Activated T-helper 2 cell treated with anti-CD3 and anti-CD28 coated beads, Interferon-gamma antibody, Interleukin-2, Interleukin-4, amounts not matched to agents 10 μg/mL and 5 μg/mL and 100 μg/mL, durations not matched to agents 14 hours and 24 hours and 36 hours (primary cell): ENCODE measurements at regions of chr10 and their contacts with region 1.

Region 1: DNA sequence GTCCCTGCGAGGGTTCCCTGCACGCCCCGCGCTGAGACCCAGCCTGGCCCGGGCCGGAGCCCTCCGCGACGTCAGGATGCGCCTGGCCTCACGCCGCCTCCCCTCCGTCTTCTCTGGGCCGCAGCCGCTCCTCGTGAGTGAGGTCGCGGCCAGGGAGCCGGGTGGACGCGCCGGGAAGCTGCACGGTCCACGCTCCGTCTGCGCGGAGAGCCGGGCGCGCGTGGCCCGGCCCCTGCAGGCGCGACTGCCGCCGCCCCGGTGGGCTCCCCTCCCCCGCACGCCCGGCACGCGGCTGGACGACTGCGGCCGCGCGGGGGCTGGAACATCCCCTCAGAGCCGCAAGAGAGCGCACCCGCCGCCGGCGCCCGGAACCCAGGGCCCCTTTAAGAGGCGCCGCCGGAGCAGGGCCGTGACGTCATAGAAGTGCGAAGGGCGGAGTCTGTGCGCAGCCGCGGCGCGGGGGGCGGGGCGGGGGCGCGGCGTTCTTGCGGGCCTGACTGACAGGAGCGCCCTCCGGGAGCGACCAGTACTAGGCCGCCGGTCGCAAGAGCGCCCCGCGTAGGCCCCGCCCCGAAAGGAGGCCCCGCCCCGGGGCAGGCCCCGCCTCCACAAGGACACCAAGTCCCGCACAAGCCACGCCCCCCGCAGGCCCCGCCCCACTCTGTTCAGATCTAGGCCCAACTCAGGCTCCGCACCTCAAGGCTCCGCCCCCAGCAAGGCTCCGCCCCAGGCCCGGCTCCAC is 445 bp upstream of the INPP5A start:
- DNase-seq: peak; percentile 100
- H3K4me3 Mint-ChIP-seq: peak overlapping the region; percentile 61
- H3K27ac Mint-ChIP-seq: no peak overlapping the region
- H3K4me1 Mint-ChIP-seq: peaks cover 38% of the 10 kb centered on the region
- H3K27me3 Mint-ChIP-seq: peaks cover 10% of the 10 kb centered on the region

Region 2: DNA sequence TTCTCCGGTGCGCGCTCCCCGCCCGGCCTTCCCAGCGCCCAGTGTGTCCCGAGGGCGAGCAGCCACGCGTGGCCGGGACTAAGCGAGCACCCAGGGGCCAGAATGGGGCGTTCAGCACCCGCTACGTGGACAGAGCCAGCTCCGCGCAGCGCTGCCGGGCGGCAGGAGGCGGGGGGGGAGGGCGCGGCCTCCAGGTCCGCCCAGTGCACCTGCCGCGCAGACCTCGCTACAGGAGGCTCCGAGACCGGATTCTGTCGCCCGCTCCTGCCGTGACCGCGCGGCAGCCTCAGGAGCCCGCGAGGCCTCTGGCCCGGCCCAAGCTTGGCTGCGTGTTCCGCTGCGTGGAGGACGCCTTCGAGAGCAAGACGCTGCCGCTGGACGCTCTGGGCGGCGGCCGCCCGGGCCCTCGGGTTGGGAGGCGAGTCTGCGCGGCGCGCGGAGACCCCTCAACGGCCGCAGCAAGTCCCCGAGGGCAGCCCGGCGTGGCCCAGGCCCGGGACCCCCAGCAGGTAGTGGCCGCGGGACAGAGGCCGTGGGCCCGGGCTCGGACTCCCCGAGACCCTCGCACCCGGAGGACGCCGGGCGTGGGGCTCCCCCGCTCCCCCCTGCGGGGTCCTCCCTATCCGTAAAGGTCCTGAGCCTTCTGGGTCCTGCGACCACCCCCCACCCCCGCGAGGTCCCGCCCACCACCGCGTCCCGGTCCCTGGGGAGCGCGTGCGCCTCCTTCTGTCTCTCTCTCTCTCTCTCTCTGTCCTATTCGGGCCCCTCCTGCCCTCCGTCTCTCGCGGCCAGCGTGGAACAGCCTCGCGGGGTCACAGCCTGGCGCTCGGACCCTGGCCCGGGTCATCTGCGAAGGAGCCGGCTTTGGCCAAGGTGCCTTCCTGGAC is 351.3 kb before region 1 on chr10:
- intact Hi-C with region 1: loop called (anchors 2 kb)
- DNase-seq: peak; percentile 64
- H3K4me3 Mint-ChIP-seq: peak overlapping the region; percentile 54
- H3K27ac Mint-ChIP-seq: no peak overlapping the region
- H3K4me1 Mint-ChIP-seq: no peaks in the 10 kb centered on the region
- H3K27me3 Mint-ChIP-seq: peaks cover 36% of the 10 kb centered on the region

Region 3: GRCh38 chr10:132307823-132308587 is 229.1 kb before region 1 on chr10 and contains the start of gene STK32C:
- intact Hi-C with region 1: loop called (anchors 1 kb)
- DNase-seq: peak; percentile 81
- H3K4me3 Mint-ChIP-seq: peak within 1 kb of the TSS; percentile 90
- H3K27ac Mint-ChIP-seq: peak within 1 kb of the TSS; percentile 38
- H3K4me1 Mint-ChIP-seq: peaks cover 4% of the 10 kb centered on the region
- H3K27me3 Mint-ChIP-seq: peaks cover 31% of the 10 kb centered on the region
- total RNA-seq, gene STK32C: 17.3 and 18.8 TPM in 2 replicates

Region 4: GRCh38 chr10:132446661-132447194 is 90.4 kb before region 1 on chr10:
- intact Hi-C with region 1: loop called (anchors 2 kb)
- DNase-seq: peak; percentile 69
- H3K4me3 Mint-ChIP-seq: peak overlapping the region; percentile 66
- H3K27ac Mint-ChIP-seq: peak overlapping the region; percentile 96
- H3K4me1 Mint-ChIP-seq: peaks cover 26% of the 10 kb centered on the region
- H3K27me3 Mint-ChIP-seq: no peaks in the 10 kb centered on the region

Region 5: DNA sequence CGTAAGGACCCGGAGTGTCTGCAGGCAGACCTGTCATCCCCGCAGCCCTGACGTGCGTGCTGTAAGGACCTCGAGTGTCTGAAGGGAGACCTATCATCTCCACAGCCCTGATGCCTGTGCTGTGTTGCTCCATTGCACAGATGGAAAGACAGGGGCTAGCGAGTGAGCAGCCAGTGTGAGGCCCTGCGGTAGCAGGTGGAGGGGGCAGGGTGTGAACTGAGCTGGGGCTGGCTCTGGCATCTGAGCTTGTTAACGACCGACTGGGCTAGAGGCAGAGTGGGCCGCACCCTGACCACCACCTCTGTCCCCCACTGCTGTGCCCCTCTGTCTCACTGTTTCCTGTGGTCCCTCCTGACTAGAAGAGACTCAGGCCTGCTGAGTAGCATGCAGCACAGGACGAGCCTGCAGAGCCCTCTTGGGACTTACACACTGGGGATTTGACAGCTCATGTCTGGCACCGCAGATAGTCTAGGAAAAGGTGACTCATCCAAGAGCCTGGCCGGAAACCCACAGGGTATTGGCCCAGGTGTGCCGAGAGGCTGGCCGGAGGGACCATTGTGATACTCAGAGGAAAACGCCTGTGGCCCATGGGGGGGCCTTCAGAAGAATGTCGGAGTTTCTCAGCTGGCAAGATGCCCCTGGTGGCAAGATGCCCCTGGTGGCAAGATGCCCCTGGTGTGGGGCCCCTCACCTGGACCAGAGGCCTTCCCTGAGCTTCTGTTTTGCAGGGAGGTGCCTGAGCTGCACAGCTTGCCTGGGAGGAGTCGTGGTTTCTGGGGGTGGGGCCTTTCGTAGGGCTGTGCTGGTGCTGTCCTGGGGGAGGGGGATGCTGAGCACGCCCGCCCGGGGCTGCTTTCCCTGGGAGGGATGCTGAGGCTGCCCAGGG is 34.8 kb after region 1 on chr10:
- intact Hi-C with region 1: loop called (anchors 1 kb)
- DNase-seq: peak; percentile 72
- H3K4me3 Mint-ChIP-seq: peak overlapping the region; percentile 18
- H3K27ac Mint-ChIP-seq: peak overlapping the region; percentile 64
- H3K4me1 Mint-ChIP-seq: peaks cover 21% of the 10 kb centered on the region
- H3K27me3 Mint-ChIP-seq: peaks cover 4% of the 10 kb centered on the region

Region 6: DNA sequence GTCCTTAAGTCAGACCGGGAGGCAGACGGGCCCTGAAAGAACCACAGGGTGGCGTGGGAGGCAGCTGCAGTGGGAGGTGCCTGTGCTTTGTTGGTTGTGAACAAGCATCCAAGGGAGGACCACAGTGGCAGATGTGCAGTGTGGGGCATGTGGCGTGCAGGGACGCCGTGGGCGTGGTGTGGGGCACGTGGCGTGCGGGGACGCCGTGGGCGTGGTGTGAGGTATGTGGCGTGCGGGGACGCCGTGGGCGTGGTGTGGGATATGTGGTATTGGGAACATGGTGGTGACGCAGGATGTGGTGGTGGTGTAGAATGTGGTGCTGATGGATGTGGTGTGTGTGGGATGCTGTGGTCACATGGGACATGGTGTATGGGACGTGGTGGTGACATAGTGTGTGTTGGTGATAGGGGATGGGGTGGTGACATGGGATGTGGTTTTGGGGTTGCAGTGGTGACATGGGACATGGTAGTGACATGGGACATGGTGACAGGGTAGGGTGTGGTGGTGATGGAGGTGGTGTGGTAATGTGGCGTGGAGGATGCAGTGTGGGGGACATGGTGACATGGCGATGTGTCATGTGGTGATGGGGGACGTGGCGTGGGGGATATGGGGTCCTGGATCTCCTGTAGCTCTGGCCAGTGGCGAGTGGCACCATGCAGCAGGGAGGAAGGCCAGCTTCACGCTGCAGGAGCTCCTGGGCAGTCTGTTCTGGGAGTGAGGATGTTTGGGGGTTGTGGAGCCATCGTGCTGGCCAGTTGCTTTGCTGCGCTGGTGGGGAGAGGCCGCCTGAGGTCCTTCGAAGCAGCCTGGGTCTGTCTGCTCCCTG is 79.2 kb after region 1 on chr10:
- intact Hi-C with region 1: loop called (anchors 2 kb)
- DNase-seq: peak; percentile 66
- H3K4me3 Mint-ChIP-seq: no peak overlapping the region
- H3K27ac Mint-ChIP-seq: peak overlapping the region; percentile 82
- H3K4me1 Mint-ChIP-seq: peaks cover 18% of the 10 kb centered on the region
- H3K27me3 Mint-ChIP-seq: peaks cover 3% of the 10 kb centered on the region

Region 7: GRCh38 chr10:133378251-133379096 is 841.3 kb after region 1 on chr10:
- intact Hi-C with region 1: loop called (anchors 5 kb)
- DNase-seq: peak; percentile 58
- H3K4me3 Mint-ChIP-seq: peak overlapping the region; percentile 69
- H3K27ac Mint-ChIP-seq: no peak overlapping the region
- H3K4me1 Mint-ChIP-seq: peaks cover 9% of the 10 kb centered on the region
- H3K27me3 Mint-ChIP-seq: peaks cover 5% of the 10 kb centered on the region